PC-3 (cell line): ENCODE measurements at regions of chr9 and their contacts with region 1.

Region 1: DNA sequence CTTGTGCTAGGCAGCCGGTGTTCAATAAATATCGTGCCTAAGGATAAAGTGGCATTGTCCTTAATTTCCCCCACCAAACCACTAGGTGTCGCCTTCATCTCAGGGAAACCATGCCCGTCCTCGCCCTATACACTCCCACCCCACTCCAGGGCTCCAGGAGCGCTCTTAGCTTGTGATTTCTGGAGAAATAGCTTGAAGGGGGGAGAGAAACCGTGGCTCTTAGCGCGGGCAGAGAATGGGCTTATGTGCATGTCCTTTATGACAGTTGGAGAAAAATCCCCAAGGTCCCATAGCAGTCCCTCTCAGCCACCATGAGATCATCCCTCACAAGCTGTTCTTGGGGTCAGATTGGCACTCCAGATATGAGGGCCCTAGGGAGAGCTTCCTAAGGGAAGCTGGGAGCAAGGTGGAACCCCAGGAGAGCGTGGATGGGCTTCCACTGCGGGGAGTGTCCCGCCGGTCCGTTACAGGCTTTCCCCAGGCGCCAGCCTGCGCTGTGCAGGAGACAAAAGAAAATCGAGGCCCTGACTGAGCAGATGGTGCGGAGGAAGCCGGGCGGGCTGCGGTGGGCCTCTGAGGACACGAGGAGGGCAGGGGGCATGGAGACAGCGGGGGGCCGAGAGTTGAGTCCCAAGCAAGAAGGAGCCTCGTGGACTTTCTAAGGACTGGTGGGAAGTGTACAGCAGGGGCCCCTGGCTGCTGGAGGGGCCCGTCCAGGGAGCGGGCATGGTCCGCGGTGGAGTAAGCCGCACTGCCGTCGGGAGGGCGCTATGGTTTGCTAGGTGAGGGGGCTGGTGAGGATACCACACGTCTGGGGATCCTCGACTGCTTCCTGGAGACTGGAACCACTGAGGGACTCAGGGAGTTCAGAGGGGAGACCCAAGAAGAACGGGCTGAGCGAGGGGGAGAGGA is 750 bp upstream of the NPR2 start:
- DNase-seq: peak; percentile 77
- ATAC-seq: peak; percentile 86
- H3K4me3 ChIP-seq: no peak overlapping the region
- H3K27ac ChIP-seq: no peak overlapping the region
- H3K4me1 ChIP-seq: peaks cover 16% of the 10 kb centered on the region
- H3K27me3 ChIP-seq: no peaks in the 10 kb centered on the region
- CTCF ChIP-seq: peak; percentile 82

Region 2: DNA sequence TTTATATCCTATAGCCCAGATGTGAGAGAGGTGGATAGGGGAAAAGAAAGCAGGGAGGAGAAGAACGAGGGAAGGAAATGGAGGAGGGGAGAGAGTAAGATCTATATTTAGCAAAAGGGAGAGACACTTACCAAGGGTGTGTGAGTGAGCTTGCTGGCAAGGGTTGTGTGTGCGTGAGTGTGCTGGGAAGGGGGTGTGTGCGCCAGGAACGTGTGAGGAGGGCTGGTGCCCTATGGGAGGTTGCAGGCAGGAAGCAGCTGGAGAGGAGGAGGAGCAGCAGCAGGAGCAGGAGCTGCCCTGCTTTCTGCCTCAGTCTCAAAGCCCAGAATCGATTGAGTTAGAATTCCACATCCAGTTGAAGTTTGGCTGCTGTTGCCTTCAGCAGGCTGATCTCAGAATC is 449.1 kb before region 1 on chr9:
- CTCF ChIA-PET with region 1: no interaction called
- POLR2A ChIA-PET with region 1: no interaction called
- intact Hi-C with region 1: no loop called
- DNase-seq: no peak
- ATAC-seq: no peak
- H3K4me3 ChIP-seq: no peak overlapping the region
- H3K27ac ChIP-seq: no peak overlapping the region
- H3K4me1 ChIP-seq: no peaks in the 10 kb centered on the region
- H3K27me3 ChIP-seq: no peaks in the 10 kb centered on the region
- CTCF ChIP-seq: no peak

Region 3: GRCh38 chr9:35548571-35548970 is 242.1 kb before region 1 on chr9:
- CTCF ChIA-PET with region 1: no interaction called
- POLR2A ChIA-PET with region 1: no interaction called
- intact Hi-C with region 1: no loop called
- DNase-seq: no peak
- ATAC-seq: no peak
- H3K4me3 ChIP-seq: no peak overlapping the region
- H3K27ac ChIP-seq: no peak overlapping the region
- H3K4me1 ChIP-seq: peaks cover 14% of the 10 kb centered on the region
- H3K27me3 ChIP-seq: no peaks in the 10 kb centered on the region
- CTCF ChIP-seq: no peak

Region 4: GRCh38 chr9:35657546-35658136 is 133.0 kb before region 1 on chr9 and contains the start of gene RMRP:
- CTCF ChIA-PET with region 1: no interaction called
- POLR2A ChIA-PET with region 1: no interaction called
- intact Hi-C with region 1: loop called (anchors 10 kb)
- DNase-seq: peak; percentile 96
- ATAC-seq: peak; percentile 88
- H3K4me3 ChIP-seq: peak within 1 kb of the TSS; percentile 96
- H3K27ac ChIP-seq: peak within 1 kb of the TSS; percentile 98
- H3K4me1 ChIP-seq: peaks cover 29% of the 10 kb centered on the region
- H3K27me3 ChIP-seq: no peaks in the 10 kb centered on the region
- CTCF ChIP-seq: no peak
- total RNA-seq, gene RMRP: 23,421 and 36,790 TPM in 2 replicates

Region 5: GRCh38 chr9:35732122-35732799 is 58.4 kb before region 1 on chr9 and contains the starts of genes CREB3 and TLN1:
- CTCF ChIA-PET with region 1: no interaction called
- POLR2A ChIA-PET with region 1: no interaction called
- intact Hi-C with region 1: loop called (anchors 1 kb)
- DNase-seq: peak; percentile 96
- ATAC-seq: peak; percentile 74
- H3K4me3 ChIP-seq: peak within 1 kb of the TSS; percentile 90
- H3K27ac ChIP-seq: peak within 1 kb of the TSS; percentile 84
- H3K4me1 ChIP-seq: peaks cover 53% of the 10 kb centered on the region
- H3K27me3 ChIP-seq: no peaks in the 10 kb centered on the region
- CTCF ChIP-seq: peak; percentile 21; the same call in 1 of the 2 replicates
- total RNA-seq, gene CREB3: 34.8 and 47.1 TPM in 2 replicates
- total RNA-seq, gene TLN1: 118 and 153 TPM in 2 replicates

Region 6: GRCh38 chr9:35756275-35757225 is 34.1 kb before region 1 on chr9:
- CTCF ChIA-PET with region 1: no interaction called
- POLR2A ChIA-PET with region 1: no interaction called
- intact Hi-C with region 1: loop called (anchors 2 kb)
- DNase-seq: peak; percentile 61
- ATAC-seq: peak; percentile 49
- H3K4me3 ChIP-seq: peak overlapping the region; percentile 71
- H3K27ac ChIP-seq: peak overlapping the region; percentile 79
- H3K4me1 ChIP-seq: peaks cover 30% of the 10 kb centered on the region
- H3K27me3 ChIP-seq: no peaks in the 10 kb centered on the region
- CTCF ChIP-seq: peak; percentile 68

Region 7: DNA sequence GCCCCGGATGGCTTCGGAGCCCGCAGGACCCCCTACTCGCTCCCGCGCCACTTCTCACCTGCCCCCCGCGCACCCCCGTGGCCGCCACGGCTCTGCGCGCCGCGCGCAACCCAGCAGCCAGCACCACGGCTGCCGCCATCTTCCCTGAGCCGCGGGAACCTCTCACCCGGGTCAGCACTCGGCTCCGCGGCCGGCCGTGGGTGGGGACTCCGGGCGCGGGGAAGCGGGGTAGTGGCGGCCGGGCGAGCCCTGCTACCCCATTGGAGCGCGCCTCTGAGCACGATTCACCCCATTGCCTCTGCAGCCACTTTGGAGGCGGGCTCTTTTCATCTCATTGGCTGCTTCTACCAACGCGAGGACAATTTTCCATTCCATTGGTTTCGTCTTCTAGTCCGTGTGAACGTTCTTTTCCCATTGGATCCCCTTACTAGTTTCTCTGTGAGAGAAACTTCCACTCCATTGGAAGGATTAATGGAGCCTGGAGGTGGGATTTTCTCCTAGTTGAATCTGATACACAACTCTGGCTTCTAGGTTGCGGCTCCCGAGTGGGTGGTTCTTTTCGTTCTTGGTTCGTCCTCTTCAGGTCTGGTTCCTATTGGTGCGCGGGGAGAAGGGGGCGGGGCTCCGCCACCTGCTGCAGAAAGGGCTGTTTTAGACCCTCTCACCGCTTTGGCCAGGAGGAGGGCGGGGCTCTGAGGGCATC is 24.4 kb after region 1 on chr9 and contains the start of gene HINT2:
- CTCF ChIA-PET with region 1: interaction called, 6 read pairs
- POLR2A ChIA-PET with region 1: no interaction called
- intact Hi-C with region 1: loop called (anchors 1 kb)
- DNase-seq: peak; percentile 94
- ATAC-seq: peak; percentile 89
- H3K4me3 ChIP-seq: peak within 1 kb of the TSS; percentile 86
- H3K27ac ChIP-seq: peak within 1 kb of the TSS; percentile 81
- H3K4me1 ChIP-seq: peaks cover 16% of the 10 kb centered on the region
- H3K27me3 ChIP-seq: no peaks in the 10 kb centered on the region
- CTCF ChIP-seq: no peak
- total RNA-seq, gene HINT2: 69.7 and 78.5 TPM in 2 replicates

Region 8: DNA sequence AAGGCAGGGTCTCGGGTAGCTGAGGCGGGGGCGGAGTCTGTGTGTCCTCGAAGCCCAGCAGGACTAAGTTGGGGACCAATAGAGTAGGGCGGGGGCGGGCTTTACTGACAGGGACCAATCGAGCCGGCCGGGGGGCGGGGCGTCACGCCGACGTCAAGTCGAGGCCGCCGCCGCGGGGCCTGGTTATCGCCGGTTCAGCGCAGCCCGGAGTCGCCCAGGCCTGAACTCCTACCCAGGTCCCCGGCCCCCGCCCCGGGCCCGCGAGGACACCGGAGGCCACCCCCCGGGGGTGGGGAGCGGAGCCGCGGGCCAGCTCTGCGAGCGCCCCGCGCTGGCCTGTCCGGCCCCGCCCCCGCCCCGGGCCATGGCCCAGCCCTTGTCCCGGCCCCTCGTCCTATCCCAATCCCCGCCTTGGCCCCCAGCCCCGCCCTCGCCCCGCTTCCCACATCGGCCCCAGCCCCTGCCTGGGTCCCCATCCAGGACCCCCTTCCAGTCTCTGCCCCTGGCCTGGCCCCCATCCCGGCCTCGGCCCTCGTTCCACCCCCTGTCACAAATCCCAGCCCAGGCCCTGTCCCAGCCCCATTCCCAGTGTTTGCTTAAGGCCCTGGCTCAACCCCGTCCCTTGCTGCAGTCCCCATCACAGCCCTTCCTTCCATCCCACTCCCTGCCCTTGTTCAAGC is 38.6 kb after region 1 on chr9 and contains the start of gene TMEM8B:
- CTCF ChIA-PET with region 1: interaction called, 41 read pairs
- POLR2A ChIA-PET with region 1: no interaction called
- intact Hi-C with region 1: loop called (anchors 1 kb)
- DNase-seq: peak; percentile 73
- ATAC-seq: peak; percentile 82
- H3K4me3 ChIP-seq: peak within 1 kb of the TSS; percentile 86
- H3K27ac ChIP-seq: no peak within 1 kb of the TSS
- H3K4me1 ChIP-seq: peaks cover 29% of the 10 kb centered on the region
- H3K27me3 ChIP-seq: no peaks in the 10 kb centered on the region
- CTCF ChIP-seq: no peak
- total RNA-seq, gene TMEM8B: 1.6 and 2.4 TPM in 2 replicates

Region 9: DNA sequence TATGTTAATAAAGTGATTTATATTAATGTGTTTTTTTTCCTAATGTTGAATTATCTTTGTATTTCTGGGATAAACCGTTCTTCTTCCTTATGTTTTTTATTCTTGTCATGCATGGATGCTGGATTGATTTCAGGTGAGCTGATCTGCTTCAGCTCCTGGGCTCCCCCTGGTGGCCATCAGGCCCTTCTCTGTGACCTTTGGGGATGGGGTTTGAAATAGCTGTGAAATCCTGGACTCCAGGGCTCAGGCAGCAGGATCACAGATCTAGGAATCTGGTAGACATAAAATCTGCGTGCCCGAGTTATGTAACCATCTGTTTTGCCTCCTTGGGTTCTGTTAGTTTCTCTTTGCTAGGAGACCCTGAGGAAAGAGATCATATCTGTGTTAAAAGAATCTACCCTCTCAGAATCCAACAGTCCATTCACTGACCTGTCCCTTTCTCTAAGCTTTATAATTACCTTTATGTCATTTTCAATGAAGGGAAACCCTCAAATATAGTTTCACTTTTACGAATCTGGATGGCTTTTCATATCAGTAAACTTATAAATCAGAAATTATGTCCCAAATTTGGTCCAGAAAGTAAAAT is 91.7 kb after region 1 on chr9:
- CTCF ChIA-PET with region 1: interaction called, 29 read pairs
- POLR2A ChIA-PET with region 1: interaction called, 3 read pairs
- intact Hi-C with region 1: loop called (anchors 1 kb)
- DNase-seq: peak; percentile 74
- ATAC-seq: peak; percentile 73
- H3K4me3 ChIP-seq: no peak overlapping the region
- H3K27ac ChIP-seq: no peak overlapping the region
- H3K4me1 ChIP-seq: no peaks in the 10 kb centered on the region
- H3K27me3 ChIP-seq: no peaks in the 10 kb centered on the region
- CTCF ChIP-seq: peak; percentile 92

Region 10: GRCh38 chr9:35923927-35924763 is 133.5 kb after region 1 on chr9:
- CTCF ChIA-PET with region 1: no interaction called
- POLR2A ChIA-PET with region 1: no interaction called
- intact Hi-C with region 1: no loop called
- DNase-seq: peak; percentile 95
- ATAC-seq: peak; percentile 94
- H3K4me3 ChIP-seq: peak overlapping the region; percentile 49
- H3K27ac ChIP-seq: peak overlapping the region; percentile 99
- H3K4me1 ChIP-seq: peaks cover 36% of the 10 kb centered on the region
- H3K27me3 ChIP-seq: no peaks in the 10 kb centered on the region
- CTCF ChIP-seq: no peak